Endothelial cell of umbilical vein (primary cell): ENCODE measurements at regions of chrX and their contacts with region 1.

Region 1: DNA sequence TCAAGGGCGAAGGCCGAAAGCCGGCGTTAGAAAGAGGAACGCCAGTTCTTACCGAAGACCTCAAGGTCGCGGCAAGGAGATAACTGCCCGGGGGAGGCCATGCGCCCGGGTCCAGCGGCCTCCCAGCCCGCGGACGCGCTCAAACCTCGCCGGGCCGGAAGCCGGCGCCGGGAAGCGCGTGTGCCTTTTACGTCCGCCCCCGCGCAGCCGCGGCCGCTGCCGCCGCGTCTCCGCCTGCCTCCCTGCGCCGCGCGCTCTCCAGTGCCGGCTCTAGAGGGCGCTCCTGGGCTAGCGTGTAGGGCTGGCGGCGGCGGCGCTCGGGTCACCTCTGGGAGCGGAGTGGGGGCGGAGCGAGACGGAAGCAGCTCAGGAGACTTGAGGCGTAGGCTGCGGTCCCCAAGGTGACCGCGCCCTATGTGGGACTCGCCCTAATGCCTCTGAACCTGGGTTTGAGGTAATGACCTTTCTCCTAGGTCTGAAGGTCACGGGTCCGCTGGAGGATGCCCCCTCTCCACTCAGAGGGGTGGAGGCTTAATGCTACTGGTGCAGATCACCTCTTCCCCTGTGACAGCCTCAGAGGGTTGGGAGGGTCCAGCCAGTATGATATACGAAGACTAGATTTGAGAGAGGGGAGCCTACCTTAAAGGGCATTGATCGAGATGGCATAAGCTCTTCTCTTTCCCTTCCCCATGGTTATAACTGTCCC is 839 bp downstream of the SLC25A5 start:
- DNase-seq: peak; percentile 81
- H3K4me3 ChIP-seq: peak overlapping the region; percentile 51 to 89 (median 58)
- H3K27ac ChIP-seq: peak overlapping the region; percentile 87
- H3K4me1 ChIP-seq: peaks cover 5% of the 10 kb centered on the region
- H3K27me3 ChIP-seq: no peaks in the 10 kb centered on the region
- CTCF ChIP-seq: peak; percentile 53 to 71
- POLR2A ChIP-seq: no peak

Region 2: DNA sequence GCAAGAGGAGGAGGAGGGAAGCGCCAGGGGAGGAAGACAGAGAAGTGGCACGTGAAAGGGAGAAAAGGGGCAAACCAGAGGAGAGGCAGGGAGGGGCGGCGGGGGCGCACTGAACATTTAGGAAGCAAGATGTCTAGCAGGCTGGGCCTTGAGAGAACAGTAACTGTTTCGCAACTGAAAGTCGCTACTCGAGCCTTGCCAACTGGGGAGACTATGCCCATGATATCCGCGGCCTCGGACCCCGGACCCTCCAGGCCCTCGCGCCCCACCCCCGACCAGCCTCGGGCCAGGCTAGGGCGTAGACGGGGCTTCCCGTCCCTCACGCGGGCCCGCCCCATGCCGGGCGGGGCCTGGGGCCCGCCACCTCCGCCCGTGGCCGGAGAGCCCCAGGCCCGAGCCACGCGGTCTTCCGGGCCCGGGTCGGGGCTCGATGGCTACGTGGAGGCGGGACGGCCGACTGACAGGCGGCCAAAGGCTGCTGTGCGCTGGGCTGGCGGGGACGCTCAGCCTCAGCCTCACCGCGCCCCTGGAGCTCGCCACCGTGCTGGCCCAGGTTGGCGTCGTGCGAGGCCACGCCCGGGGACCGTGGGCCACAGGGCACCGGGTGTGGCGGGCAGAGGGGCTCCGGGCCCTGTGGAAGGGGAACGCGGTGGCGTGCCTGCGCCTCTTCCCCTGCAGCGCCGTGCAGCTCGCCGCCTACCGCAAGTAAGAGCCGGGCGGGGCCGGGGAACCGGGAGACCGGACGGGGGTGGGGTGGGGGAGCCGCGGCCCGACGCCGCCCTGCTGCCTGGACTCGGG is 69.9 kb before region 1 on chrX and contains the start of gene SLC25A43:
- CTCF ChIA-PET with region 1: interaction called, 3 read pairs
- POLR2A ChIA-PET with region 1: no interaction called
- dilution Hi-C with region 1: no loop called
- intact Hi-C with region 1: loop called (anchors 1 kb)
- DNase-seq: peak; percentile 31
- H3K4me3 ChIP-seq: peak within 1 kb of the TSS; percentile 39 to 70 (median 60)
- H3K27ac ChIP-seq: no peak within 1 kb of the TSS
- H3K4me1 ChIP-seq: peaks cover 9% of the 10 kb centered on the region
- H3K27me3 ChIP-seq: no peaks in the 10 kb centered on the region
- CTCF ChIP-seq: no peak
- POLR2A ChIP-seq: peak; percentile 11
- total RNA-seq, gene SLC25A43: 6.7 and 11.5 TPM in 2 replicates

Region 3: DNA sequence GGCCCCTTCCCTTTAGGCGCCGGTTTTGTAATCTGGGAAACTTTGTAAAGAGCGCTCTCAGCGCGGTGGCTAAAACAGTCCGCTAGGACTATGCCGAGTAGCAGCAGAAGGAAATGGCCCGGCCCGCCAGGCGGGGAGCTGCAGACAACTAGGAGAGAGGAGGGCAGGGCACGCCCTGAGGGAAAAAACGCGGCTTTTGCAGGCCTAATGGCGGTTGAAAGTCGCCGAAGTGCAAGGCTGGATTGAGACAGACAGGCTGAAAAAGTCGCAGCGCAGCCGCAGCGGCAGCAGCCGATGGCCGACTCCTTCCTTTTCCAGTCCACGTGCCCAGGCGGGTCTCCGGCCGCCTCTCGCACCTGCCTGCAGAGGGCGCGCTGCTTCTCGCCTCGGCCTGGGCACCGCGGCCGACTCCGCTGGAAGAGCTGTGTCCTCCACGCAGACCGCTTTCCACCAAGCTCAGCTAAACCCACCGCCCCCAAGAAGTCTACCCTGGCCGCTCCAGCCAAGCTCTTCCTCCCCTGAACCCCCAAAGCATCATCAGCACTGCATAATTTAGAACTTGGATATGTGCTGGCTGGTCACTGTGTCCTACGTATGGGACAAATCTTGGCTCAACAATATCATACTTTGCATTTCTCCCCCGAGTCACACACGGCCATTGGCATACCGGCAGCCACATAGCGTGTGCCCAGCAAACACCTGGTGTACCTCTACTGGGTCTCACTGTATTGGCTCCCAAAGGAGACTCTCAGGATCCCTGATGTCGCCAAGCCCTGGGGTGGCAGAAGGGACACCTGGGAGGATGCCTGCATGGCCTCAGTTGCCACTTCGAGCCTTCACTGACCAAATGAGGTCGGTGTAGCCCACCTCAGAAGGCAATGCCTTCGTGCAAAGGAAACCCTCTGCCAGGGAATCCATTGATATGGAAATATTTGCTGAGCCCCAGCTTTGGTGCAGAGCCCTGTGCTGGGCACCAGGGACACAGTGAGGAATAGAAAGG is 13.7 kb after region 1 on chrX:
- CTCF ChIA-PET with region 1: interaction called, 11 read pairs
- POLR2A ChIA-PET with region 1: no interaction called
- dilution Hi-C with region 1: no loop called
- intact Hi-C with region 1: loop called (anchors 2 kb)
- DNase-seq: peak; percentile 52
- H3K4me3 ChIP-seq: peak overlapping the region in 2 of 3 experiments; percentile 36 to 37
- H3K27ac ChIP-seq: no peak overlapping the region
- H3K4me1 ChIP-seq: no peaks in the 10 kb centered on the region
- H3K27me3 ChIP-seq: no peaks in the 10 kb centered on the region
- CTCF ChIP-seq: peak; percentile 74 to 83
- POLR2A ChIP-seq: no peak

Region 4: GRCh38 chrX:119852382-119853353 is 383.6 kb after region 1 on chrX and contains the start of gene UPF3B:
- CTCF ChIA-PET with region 1: no interaction called
- POLR2A ChIA-PET with region 1: no interaction called
- dilution Hi-C with region 1: no loop called
- intact Hi-C with region 1: loop called (anchors 5 kb)
- DNase-seq: peak; percentile 97
- H3K4me3 ChIP-seq: peak within 1 kb of the TSS; percentile 86 to 89 (median 89)
- H3K27ac ChIP-seq: peak within 1 kb of the TSS; percentile 76
- H3K4me1 ChIP-seq: peaks cover 6% of the 10 kb centered on the region
- H3K27me3 ChIP-seq: no peaks in the 10 kb centered on the region
- CTCF ChIP-seq: no peak
- POLR2A ChIP-seq: peak; percentile 70
- total RNA-seq, gene UPF3B: 10.2 and 11.9 TPM in 2 replicates